ENCODE measurements at regions of chr17 and their contacts with region 1.

Region 1: DNA sequence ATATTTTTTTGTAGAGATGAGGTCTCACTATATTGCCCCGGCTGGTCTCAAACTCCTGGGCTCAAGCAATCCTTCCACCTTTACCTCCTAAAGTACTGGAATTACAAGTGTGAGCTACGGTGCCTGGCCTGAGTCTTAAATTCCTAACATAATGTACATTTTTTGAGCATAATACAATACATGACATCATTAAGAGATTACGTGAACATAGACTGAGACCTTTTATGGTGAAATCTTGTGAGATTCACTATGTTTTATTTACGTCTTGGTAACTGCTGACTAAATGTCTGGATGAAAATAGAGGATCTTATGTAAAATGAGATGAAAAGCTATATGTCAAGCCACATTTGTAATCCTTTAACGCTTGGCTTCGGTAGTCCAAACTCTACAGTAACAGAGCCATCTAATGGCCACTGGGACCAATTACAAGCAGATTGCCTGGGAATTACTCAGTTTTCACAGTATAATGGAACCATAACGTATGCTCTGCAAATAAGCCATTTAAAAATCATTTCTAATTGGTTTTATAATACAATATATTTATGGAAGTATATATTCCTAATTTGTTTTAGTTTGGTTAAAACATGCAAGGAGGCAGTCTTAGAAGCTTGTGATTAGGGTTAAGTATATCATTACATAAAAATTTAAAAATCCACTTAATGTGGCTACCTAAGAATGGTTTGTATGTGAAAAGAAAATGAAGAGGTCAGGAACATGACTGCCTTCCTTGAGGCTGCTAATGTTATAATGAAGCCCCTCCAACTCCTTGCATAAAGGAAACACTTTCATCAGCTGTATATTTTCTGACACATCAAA is 8.1 kb upstream of the EFCAB13 start:
- DNase-seq: peak; percentile 89
- H3K4me3 ChIP-seq: no peak overlapping the region
- H3K27ac ChIP-seq: peak overlapping the region; percentile 90
- H3K4me1 ChIP-seq: peaks cover 46% of the 10 kb centered on the region
- H3K27me3 ChIP-seq: no peaks in the 10 kb centered on the region
- CTCF ChIP-seq: peak; percentile 56 to 63
- POLR2A ChIP-seq: no peak

Region 2: DNA sequence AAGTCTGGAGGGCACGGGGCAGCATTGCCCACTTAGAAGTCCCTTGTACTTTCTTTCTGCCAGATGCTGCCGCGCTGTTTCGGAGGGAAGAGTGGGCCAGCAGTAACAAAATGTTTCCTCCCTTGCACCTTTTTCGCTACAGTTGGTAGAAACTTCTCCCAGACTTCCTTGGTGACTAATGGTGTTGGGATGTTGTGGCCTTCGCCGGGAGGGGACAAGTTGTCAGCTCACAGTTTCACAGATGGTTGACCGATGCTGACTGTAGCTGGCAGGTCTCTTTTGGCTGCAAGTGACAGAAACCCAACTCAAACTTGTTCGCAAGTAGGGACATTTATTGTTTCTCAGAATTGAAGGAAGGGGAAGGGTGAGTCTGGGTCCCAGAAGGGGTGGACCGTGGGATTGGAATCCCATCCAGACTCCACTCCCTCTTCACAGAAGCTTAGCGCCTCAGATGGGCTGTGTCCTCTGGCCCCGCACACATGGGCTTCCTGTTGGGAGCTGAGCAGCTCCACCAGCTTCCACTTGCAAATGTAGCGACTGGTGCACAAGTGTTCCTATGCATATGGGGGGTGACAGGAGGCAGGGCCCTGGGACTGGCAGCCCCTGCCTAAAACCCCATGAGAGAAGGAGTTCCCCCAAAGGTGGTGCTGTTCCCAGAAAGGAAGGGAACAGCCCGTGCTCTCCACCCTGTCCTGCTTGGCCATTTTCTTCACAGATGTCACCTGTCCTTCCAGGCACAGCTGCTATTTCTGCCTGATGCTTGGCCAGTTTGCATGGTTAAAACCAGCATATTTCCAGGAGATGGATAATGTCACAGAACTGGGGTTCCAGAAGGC is 305.7 kb before region 1 on chr17:
- CTCF ChIA-PET with region 1: no interaction called
- POLR2A ChIA-PET with region 1: no interaction called
- dilution Hi-C with region 1: no loop called
- intact Hi-C with region 1: no loop called
- DNase-seq: no peak
- H3K4me3 ChIP-seq: no peak overlapping the region
- H3K27ac ChIP-seq: no peak overlapping the region
- H3K4me1 ChIP-seq: peaks cover 8% of the 10 kb centered on the region
- H3K27me3 ChIP-seq: no peaks in the 10 kb centered on the region
- CTCF ChIP-seq: no peak
- POLR2A ChIP-seq: no peak

Region 3: DNA sequence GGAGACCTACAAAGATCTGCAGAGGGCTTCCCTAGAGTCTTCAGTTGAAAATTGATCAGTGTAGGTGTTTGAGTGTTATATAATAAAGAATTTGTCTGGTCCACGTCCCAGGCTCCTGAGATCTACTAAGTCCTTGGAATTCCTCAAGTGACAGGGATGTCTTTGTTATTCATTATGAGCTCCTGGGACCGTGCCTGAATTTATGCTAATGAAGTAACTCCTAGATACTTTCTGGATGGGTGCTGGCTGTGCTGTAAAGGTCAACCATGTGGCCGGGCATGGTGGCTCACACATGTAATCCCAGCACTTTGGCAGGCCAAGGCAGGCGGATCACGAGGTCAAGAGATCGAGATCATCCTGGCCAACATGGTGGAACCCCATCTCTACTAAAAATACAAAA is 170.3 kb before region 1 on chr17:
- CTCF ChIA-PET with region 1: interaction called, 12 read pairs
- POLR2A ChIA-PET with region 1: no interaction called
- dilution Hi-C with region 1: no loop called
- intact Hi-C with region 1: no loop called
- DNase-seq: no peak
- H3K4me3 ChIP-seq: no peak overlapping the region
- H3K27ac ChIP-seq: no peak overlapping the region
- H3K4me1 ChIP-seq: no peaks in the 10 kb centered on the region
- H3K27me3 ChIP-seq: no peaks in the 10 kb centered on the region
- CTCF ChIP-seq: no peak
- POLR2A ChIP-seq: no peak

Region 4: DNA sequence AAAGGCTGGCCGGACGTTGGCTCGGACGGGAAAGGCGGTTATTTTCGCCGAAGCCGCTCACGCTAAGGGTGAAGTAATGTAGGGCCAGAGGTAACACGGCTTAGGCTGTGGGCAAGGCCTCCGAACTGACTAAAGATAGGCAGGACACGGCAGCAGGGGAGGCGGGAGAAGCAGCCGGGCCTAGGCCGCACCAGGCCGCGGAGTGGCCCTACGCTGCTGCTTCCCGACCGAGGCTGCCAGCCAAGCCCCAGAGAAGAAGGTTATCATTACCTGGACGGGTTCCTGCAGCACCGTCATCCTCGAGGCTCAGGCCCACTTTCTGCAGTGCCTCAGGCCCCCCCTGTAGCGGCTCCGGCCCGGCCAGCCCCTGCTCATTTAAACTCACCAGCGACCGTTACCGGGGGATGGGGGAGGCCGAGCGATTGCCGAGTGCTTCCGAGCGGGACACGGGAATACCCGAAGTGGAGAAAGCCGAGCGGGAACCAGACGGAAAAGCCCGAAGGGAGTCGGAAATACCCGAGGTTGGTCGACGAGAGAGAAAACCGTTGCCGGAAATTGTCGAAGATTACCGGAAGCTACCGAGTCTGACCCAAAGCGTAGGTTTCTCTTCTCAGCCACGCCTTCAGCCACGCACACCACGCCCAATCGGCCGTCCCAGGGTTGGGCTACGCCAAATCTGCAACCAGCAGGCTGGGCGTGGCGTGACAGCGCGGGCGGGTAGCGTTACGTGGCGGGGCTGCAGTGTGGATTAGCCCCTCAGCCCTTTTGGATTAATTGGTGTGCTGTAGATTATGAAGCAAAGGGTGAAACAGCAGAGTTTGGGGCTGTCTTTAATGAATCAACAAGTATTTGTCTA is 126.6 kb before region 1 on chr17 and contains the start of gene CDC27:
- CTCF ChIA-PET with region 1: interaction called, 9 read pairs
- POLR2A ChIA-PET with region 1: interaction called, 3 read pairs
- dilution Hi-C with region 1: no loop called
- intact Hi-C with region 1: loop called (anchors 2 kb)
- DNase-seq: peak; percentile 98
- H3K4me3 ChIP-seq: peak within 1 kb of the TSS; percentile 57 to 97 (median 82)
- H3K27ac ChIP-seq: peak within 1 kb of the TSS; percentile 79
- H3K4me1 ChIP-seq: peaks cover 25% of the 10 kb centered on the region
- H3K27me3 ChIP-seq: no peaks in the 10 kb centered on the region
- CTCF ChIP-seq: no peak
- POLR2A ChIP-seq: peak; percentile 72
- total RNA-seq, gene CDC27: 172 and 179 TPM in 2 replicates

Region 5: GRCh38 chr17:47229535-47230443 is 85.9 kb before region 1 on chr17:
- CTCF ChIA-PET with region 1: interaction called, 120 read pairs
- POLR2A ChIA-PET with region 1: interaction called, 6 read pairs
- dilution Hi-C with region 1: no loop called
- intact Hi-C with region 1: loop called (anchors 1 kb)
- DNase-seq: peak; percentile 93
- H3K4me3 ChIP-seq: no peak overlapping the region
- H3K27ac ChIP-seq: peak overlapping the region; percentile 38
- H3K4me1 ChIP-seq: peaks cover 30% of the 10 kb centered on the region
- H3K27me3 ChIP-seq: no peaks in the 10 kb centered on the region
- CTCF ChIP-seq: peak; percentile 98 to 99
- POLR2A ChIP-seq: peak; percentile 55

Region 6: DNA sequence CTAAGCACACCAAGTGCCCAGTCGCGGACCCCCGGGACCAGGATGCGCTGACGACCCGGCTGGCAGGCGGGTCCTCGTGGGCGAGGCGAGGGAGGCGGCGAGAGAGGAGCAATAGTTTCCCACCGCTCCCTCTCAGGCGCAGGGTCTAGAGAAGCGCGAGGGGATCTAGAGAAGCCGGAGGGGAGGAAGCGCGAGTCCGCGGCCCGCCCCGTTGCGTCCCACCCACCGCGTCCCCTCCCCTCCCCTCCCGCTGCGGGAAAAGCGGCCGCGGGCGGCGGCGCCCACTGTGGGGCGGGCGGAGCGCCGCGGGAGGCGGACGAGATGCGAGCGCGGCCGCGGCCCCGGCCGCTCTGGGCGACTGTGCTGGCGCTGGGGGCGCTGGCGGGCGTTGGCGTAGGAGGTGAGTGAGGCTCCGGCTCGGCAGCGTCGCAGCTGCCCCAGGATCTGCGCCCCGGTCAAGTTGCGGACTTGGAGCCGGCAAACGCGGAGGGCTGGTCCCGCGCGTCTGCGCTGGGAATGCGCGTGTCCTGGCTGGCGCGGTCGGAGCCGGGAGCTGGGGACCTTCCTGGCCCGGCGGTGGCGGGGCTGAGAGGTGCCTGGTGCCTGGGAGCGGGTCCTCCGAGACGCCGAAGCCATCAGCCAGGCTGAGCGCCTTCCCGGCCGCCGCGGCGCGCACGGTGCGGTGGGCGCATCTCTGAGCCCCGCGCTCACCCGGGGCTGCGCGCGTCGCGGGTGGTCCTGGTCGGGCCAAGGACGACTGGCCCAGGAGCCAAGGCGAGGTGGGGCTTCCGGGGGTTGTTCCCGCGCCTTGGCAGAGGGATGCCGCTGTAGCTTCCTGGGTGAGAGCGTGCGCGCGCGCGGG is 61.9 kb before region 1 on chr17 and contains the start of gene ITGB3:
- CTCF ChIA-PET with region 1: interaction called, 22 read pairs
- POLR2A ChIA-PET with region 1: no interaction called
- dilution Hi-C with region 1: no loop called
- intact Hi-C with region 1: loop called (anchors 2 kb)
- DNase-seq: peak; percentile 83
- H3K4me3 ChIP-seq: peak within 1 kb of the TSS; percentile 61 to 87 (median 68)
- H3K27ac ChIP-seq: peak within 1 kb of the TSS; percentile 37
- H3K4me1 ChIP-seq: peaks cover 38% of the 10 kb centered on the region
- H3K27me3 ChIP-seq: no peaks in the 10 kb centered on the region
- CTCF ChIP-seq: peak; percentile 55 to 66
- POLR2A ChIP-seq: peak; percentile 60
- total RNA-seq, gene ITGB3: 49.9 and 60.0 TPM in 2 replicates

Region 7: DNA sequence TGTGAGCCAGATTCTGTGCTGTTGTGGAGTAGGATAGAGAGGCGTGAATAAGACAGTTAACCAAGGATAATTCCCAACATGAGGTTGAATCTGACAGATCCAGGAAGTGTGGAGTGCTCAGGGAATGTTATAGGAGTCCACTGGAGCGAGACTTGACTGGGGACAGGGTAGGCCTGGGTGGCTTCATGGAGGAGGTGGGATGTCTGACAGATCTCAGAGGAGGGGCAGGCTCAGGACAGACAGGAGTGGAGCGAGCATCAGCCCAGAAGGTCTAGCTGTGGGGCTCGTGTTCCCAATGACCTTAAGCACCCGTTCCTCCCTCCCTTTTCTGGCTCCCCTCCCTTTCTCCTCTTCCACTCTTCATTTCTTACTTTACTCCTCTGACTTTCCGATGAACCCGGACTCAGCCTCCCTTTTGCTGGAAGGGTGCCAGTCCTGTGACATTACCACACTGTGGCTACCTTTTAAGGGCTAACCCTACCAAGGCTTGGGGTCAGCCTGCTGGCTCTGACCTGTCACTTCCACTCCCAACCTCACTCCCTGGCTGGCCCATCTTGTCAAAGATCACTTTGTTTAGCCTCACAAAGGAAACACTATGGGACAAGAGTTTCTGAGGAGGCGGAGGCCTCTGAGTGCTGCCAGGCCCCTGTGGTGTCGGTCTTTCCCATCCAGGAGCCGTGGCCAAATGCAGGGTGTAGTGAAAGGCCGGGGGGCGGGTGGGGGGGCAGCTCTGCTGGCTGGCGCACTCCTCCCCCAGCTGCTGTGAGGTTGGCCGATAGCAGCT is 20.4 kb before region 1 on chr17:
- CTCF ChIA-PET with region 1: interaction called, 17 read pairs
- POLR2A ChIA-PET with region 1: interaction called, 5 read pairs
- dilution Hi-C with region 1: no loop called
- intact Hi-C with region 1: no loop called
- DNase-seq: no peak
- H3K4me3 ChIP-seq: no peak overlapping the region
- H3K27ac ChIP-seq: peak overlapping the region; percentile 75
- H3K4me1 ChIP-seq: peaks cover 15% of the 10 kb centered on the region
- H3K27me3 ChIP-seq: no peaks in the 10 kb centered on the region
- CTCF ChIP-seq: no peak
- POLR2A ChIP-seq: no peak

Region 8: GRCh38 chr17:47373002-47373401 is 57.3 kb after region 1 on chr17:
- CTCF ChIA-PET with region 1: no interaction called
- POLR2A ChIA-PET with region 1: no interaction called
- dilution Hi-C with region 1: no loop called
- intact Hi-C with region 1: no loop called
- DNase-seq: no peak
- H3K4me3 ChIP-seq: no peak overlapping the region
- H3K27ac ChIP-seq: no peak overlapping the region
- H3K4me1 ChIP-seq: no peaks in the 10 kb centered on the region
- H3K27me3 ChIP-seq: no peaks in the 10 kb centered on the region
- CTCF ChIP-seq: no peak
- POLR2A ChIP-seq: no peak

Region 9: DNA sequence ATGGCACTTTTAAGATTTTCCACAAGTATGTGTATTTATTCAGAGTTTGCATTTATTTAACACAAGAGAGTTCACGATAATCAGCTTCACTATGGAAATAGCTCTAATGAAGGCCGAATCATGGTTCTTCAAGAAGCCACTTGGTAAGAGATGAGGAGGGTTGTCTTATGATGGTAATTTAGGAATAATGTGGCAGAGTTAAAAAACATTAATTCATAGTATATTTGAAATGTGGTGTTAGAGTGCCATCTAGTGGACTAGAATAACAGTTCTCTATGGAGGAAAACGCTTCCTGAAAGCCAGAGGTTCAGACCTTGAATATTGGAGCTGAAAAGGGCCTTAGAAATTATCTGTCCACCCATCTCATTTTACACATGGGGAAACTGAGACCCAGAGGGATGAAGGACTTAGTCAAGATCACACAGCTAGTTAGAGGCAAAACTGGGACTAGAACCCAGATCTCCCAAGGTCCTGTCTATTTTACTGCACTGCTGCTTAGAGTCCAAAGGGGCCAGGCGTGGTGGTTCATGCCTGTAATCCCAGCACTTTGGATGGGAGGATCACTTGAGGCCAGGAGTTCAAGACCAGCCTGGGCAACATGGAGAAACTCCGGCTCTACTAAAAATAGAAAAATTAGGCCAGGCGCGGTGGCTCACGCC is 300.2 kb after region 1 on chr17:
- CTCF ChIA-PET with region 1: interaction called, 28 read pairs
- POLR2A ChIA-PET with region 1: no interaction called
- dilution Hi-C with region 1: no loop called
- intact Hi-C with region 1: loop called (anchors 5 kb)
- DNase-seq: peak; percentile 61
- H3K4me3 ChIP-seq: no peak overlapping the region
- H3K27ac ChIP-seq: no peak overlapping the region
- H3K4me1 ChIP-seq: no peaks in the 10 kb centered on the region
- H3K27me3 ChIP-seq: no peaks in the 10 kb centered on the region
- CTCF ChIP-seq: peak; percentile 38 to 40
- POLR2A ChIP-seq: no peak

Measured in endothelial cell of umbilical vein (primary cell).